Activated CD8-positive, alpha-beta T cell treated with anti-CD3 and anti-CD28 coated beads, Interleukin-2, amount 10 ng/mL, durations not matched to agents 7 days and 5 days (primary cell): ENCODE measurements at regions of chr20 and their contacts with region 1.

Region 1: GRCh38 chr20:58650776-58651558 is at the start of gene STX16:
- DNase-seq: peak; percentile 91
- ATAC-seq: peak; percentile 79
- H3K4me3 Mint-ChIP-seq: peak within 1 kb of the TSS; percentile 99
- H3K27ac Mint-ChIP-seq: peak within 1 kb of the TSS; percentile 99
- H3K4me1 Mint-ChIP-seq: peaks cover 16% of the 10 kb centered on the region
- H3K27me3 Mint-ChIP-seq: no peaks in the 10 kb centered on the region
- total RNA-seq, gene STX16: 128 to 136 TPM

Region 2: GRCh38 chr20:58388882-58389323 is 262.1 kb before region 1 on chr20 and contains the start of gene VAPB:
- CTCF ChIA-PET with region 1: no interaction called
- POLR2A ChIA-PET with region 1: interaction called, 10 read pairs
- DNase-seq: peak; percentile 96
- ATAC-seq: peak; percentile 98
- H3K4me3 Mint-ChIP-seq: peak within 1 kb of the TSS; percentile 88
- H3K27ac Mint-ChIP-seq: peak within 1 kb of the TSS; percentile 95
- H3K4me1 Mint-ChIP-seq: peaks cover 35% of the 10 kb centered on the region
- H3K27me3 Mint-ChIP-seq: peaks cover 8% of the 10 kb centered on the region
- total RNA-seq, gene VAPB: 34.5 to 36.8 TPM

Region 3: DNA sequence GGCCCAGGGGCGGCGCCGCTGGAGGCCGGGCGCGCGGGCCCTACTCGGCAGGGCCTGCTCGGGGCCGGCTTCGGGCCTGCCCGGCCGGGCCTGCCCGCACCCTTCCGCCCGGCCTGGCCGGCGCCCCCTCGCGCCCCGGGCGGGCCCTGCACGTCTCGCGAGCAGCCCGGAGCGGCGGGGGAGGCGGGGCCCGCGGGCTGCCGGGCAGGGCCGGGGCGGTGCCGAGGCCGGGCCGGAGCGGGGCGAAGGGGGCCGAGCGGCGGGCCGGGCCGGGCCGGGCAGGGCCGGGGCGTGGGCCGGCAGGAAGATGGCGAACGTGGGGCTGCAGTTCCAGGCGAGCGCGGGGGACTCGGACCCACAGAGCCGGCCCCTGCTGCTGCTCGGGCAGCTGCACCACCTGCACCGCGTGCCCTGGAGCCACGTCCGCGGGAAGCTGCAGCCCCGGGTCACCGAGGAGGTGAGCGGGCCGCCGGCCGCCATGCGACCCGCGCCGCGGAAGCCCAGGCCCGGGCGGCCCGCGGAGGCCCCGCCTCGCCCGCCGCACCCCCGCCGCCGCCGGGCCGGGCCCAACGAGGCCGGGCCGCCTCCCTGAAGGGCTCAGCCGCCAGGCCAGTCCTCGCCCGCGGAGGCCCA is 41.7 kb after region 1 on chr20 and contains the start of gene NPEPL1:
- CTCF ChIA-PET with region 1: interaction called, 13 read pairs
- POLR2A ChIA-PET with region 1: interaction called, 33 read pairs
- DNase-seq: peak; percentile 64
- ATAC-seq: peak; percentile 94
- H3K4me3 Mint-ChIP-seq: peak within 1 kb of the TSS; percentile 72
- H3K27ac Mint-ChIP-seq: peak within 1 kb of the TSS; percentile 79
- H3K4me1 Mint-ChIP-seq: peaks cover 20% of the 10 kb centered on the region
- H3K27me3 Mint-ChIP-seq: no peaks in the 10 kb centered on the region
- total RNA-seq, gene NPEPL1: 22.9 to 26.8 TPM

Region 4: DNA sequence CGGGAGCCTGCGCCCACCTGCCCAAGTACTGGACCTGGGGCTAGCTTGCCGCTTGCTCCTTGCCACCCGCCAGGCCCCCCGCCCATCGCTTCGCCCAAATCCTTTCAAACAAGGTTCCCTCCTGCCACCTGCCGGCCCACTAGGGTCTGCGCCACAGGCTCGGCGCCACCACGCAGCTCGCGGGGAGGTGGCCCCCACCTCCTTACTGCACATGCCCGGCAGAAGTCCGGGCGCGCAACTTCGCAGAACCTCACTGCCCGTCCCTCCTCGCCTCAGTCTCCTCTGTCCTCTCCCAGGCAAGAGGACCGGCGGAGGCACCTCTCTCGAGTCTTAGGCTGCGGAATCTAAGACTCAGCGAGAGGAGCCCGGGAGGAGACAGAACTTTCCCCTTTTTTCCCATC is 188.5 kb after region 1 on chr20:
- CTCF ChIA-PET with region 1: interaction called, 46 read pairs
- POLR2A ChIA-PET with region 1: interaction called, 3 read pairs
- DNase-seq: peak; percentile 61
- ATAC-seq: peak; percentile 71
- H3K4me3 Mint-ChIP-seq: no peak overlapping the region
- H3K27ac Mint-ChIP-seq: no peak overlapping the region
- H3K4me1 Mint-ChIP-seq: peaks cover 52% of the 10 kb centered on the region
- H3K27me3 Mint-ChIP-seq: peaks cover 67% of the 10 kb centered on the region

Region 5: DNA sequence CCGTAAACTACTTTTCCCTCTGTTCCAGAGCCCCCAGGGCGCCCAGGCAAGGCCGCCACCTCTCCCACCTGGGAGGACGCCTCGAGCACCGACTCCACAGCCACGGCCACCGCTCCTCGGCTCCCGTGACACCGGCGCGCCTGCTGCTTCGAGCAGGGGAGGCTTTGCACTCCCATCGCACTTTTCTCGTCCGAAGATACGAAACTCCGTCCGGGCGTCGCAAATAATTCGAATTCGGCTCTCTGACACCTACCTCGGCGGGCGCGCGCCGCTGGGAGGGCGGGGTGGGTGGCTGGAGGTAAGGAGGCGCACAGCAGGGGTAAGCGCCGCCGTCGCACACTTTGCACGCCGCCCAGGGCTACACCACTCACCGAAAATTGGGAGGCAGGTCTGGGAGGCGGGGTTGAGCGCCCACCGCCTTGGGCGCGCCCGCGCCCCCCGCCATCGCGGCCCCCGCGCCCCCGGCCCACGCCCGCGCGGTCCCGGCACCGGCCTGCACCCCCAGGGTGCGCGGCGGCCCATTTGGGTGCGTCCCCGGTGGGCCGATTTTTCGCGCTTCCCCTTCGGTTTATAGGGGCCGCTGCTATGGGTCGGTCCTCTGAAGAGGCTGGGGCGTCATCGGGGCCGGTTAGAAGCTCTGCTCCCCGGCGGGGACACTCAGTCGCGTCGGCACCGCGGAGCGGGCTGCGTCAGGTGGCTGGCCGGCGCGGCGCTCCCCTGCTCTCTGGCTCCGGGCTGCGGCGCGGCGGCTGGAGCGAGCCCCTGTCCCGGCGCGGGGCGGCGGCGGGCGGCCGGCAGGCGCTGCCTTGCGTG is 237.8 kb after region 1 on chr20:
- CTCF ChIA-PET with region 1: interaction called, 3 read pairs
- POLR2A ChIA-PET with region 1: interaction called, 11 read pairs
- DNase-seq: peak; percentile 88
- ATAC-seq: peak; percentile 57
- H3K4me3 Mint-ChIP-seq: peak overlapping the region; percentile 83
- H3K27ac Mint-ChIP-seq: peak overlapping the region; percentile 84
- H3K4me1 Mint-ChIP-seq: peaks cover 37% of the 10 kb centered on the region
- H3K27me3 Mint-ChIP-seq: no peaks in the 10 kb centered on the region

Region 6: GRCh38 chr20:59159493-59160376 is 508.8 kb after region 1 on chr20:
- CTCF ChIA-PET with region 1: no interaction called
- POLR2A ChIA-PET with region 1: interaction called, 11 read pairs
- DNase-seq: peak; percentile 82
- ATAC-seq: peak; percentile 74
- H3K4me3 Mint-ChIP-seq: peak overlapping the region; percentile 89
- H3K27ac Mint-ChIP-seq: peak overlapping the region; percentile 97
- H3K4me1 Mint-ChIP-seq: peaks cover 67% of the 10 kb centered on the region
- H3K27me3 Mint-ChIP-seq: no peaks in the 10 kb centered on the region